ENCODE measurements at regions of chr4 and their contacts with region 1.

Region 1: GRCh38 chr4:61555789-61556188 is 355.7 kb downstream of the ADGRL3 start:
- DNase-seq: no peak
- H3K4me3 ChIP-seq: no peak overlapping the region
- H3K27ac ChIP-seq: peak overlapping the region; percentile 51
- H3K4me1 ChIP-seq: peaks cover 15% of the 10 kb centered on the region
- H3K27me3 ChIP-seq: no peaks in the 10 kb centered on the region
- CTCF ChIP-seq: no peak

Region 2: DNA sequence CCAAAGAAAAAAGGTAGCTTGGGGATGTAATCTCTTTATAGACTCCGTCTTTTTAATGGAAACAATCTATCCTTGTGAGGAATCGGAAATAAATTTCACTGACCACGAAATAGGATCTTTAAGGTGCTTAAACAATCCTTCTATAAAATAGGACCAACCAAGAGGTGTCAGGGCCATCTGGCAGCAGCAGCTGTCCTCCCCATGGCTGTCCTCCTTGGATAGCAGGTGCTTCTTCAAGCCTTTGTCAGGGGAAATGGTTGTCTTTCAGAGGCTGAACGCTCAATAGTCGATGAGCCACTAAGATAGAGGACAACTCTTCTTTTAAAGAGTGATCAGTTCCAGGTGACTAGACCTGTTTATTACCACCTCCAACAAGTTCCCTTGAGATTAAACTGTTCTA is 124.7 kb before region 1 on chr4:
- intact Hi-C with region 1: no loop called
- DNase-seq: no peak
- H3K4me3 ChIP-seq: no peak overlapping the region
- H3K27ac ChIP-seq: no peak overlapping the region
- H3K4me1 ChIP-seq: no peaks in the 10 kb centered on the region
- H3K27me3 ChIP-seq: no peaks in the 10 kb centered on the region
- CTCF ChIP-seq: no peak

Region 3: DNA sequence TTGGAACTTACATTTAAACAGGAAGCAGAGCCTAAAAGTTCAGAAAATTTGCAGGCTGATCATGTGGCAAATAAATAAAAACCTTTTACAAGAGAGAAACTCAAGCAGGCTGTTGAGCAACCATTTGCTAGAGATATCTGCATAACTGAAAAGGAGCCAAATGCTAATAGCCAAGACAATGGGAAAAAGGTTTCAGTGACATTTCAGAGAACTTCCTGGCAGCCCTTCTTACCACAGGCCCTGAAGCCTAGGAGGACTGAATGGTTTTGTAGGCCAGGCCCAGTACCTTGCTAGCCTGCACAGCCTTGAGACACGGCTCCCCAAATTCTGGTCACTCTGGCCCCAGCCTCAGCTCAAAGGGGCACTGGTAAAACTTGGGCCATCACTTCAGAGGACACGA is 589.5 kb after region 1 on chr4:
- intact Hi-C with region 1: loop called (anchors 5 kb)
- DNase-seq: no peak
- H3K4me3 ChIP-seq: no peak overlapping the region
- H3K27ac ChIP-seq: no peak overlapping the region
- H3K4me1 ChIP-seq: peaks cover 11% of the 10 kb centered on the region
- H3K27me3 ChIP-seq: no peaks in the 10 kb centered on the region
- CTCF ChIP-seq: no peak